HEK293T (cell line): ENCODE measurements at regions of chr4 and their contacts with region 1.

Region 1: DNA sequence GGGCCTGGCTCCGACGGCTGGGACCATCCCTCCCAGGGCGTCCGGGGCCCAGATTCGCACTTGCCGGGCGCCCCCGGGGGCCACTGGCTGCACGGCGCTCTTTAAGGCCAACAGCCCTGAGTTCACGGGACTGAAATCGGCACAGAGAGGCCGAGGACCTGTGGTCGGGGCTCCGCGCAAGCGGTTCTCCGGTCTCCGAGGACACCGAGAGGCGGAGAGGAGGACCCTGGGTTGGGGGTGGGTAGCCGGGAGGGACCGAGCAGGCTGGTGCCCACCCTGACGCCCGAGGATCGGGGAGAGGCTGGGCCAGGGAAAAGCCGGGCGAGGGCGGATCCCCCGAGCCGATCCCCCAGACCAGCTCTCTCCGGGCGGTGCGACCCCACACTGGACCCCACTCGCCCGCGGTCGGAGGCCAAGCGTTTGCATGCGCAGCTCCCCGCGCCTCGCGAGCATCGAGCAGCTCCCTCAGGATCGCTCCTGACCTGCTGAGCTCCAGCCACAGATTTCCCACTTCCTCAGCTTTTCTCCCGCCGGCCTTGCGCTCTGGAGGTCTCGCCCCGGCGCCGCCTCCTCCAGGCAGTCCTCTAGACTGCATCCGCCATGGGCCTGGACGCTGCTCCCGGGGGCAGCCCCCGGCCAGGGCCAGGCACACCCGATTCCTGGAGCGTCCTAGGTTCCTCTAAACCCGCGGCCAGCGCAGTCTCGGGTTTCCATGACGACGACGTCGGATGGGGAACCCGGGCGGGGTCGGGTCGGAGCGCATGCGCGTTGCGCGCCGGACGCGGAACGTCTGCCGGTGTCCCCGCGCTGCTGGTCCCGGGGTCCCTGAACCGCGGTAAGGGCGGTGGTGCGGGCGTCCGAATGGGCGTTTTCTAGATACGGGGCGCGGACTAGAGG is 17.6 kb upstream of the NAT8L start:
- DNase-seq: peak; percentile 97

Region 2: GRCh38 chr4:2008875-2009703 is 32.4 kb before region 1 on chr4 and contains the start of gene NELFA:
- CTCF ChIA-PET with region 1: no interaction called
- POLR2A ChIA-PET with region 1: interaction called, 10 read pairs
- DNase-seq: peak; percentile 95